ENCODE measurements at regions of chr1 and their contacts with region 1.

Region 1: GRCh38 chr1:210384630-210385029 is 55.9 kb downstream of the HHAT start:
- DNase-seq: no peak

Region 2: GRCh38 chr1:210373885-210374599 is 10.6 kb before region 1 on chr1:
- CTCF ChIA-PET with region 1: interaction called, 15 read pairs
- POLR2A ChIA-PET with region 1: interaction called, 3 read pairs
- DNase-seq: peak; percentile 90

Measured in HEK293T (cell line).